Breast epithelium (tissue), 4 donors: ENCODE measurements at regions of chr6 and their contacts with region 1.

Region 1: GRCh38 chr6:16799279-16800193 is 38.3 kb upstream of the ATXN1 start:
- DNase-seq: no peak
- H3K4me3 ChIP-seq: no peak overlapping the region
- H3K27ac ChIP-seq: no peak overlapping the region
- H3K4me1 ChIP-seq: no peaks in the 10 kb centered on the region
- H3K27me3 ChIP-seq: no peaks in the 10 kb centered on the region
- CTCF ChIP-seq: no peak
- POLR2A ChIP-seq: no peak

Region 2: DNA sequence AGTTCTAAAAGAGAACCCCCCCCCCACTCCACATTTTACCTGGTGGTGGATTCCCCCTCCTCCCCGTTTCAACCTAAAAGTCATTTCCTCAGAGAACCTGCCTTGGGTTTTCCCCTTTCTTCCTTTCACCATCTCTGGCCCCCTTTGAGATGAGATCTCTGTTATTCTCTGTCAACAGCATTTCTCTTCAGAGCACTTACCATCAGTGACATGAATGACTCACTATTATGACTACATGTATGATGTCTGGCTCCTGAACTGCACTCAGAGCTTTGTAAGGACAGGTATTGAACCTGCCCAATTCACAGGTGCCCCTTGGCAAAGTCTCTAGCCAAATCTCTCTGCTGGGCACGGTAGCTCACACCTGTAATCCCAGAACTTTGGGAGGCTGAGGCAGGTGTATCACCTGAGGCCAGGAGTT is 1615.1 kb before region 1 on chr6:
- intact Hi-C with region 1: loop called (anchors 10 kb)
- DNase-seq: no peak
- H3K4me3 ChIP-seq: no peak overlapping the region
- H3K27ac ChIP-seq: no peak overlapping the region
- H3K4me1 ChIP-seq: no peaks in the 10 kb centered on the region
- H3K27me3 ChIP-seq: no peaks in the 10 kb centered on the region
- CTCF ChIP-seq: no peak
- POLR2A ChIP-seq: no peak

Region 3: DNA sequence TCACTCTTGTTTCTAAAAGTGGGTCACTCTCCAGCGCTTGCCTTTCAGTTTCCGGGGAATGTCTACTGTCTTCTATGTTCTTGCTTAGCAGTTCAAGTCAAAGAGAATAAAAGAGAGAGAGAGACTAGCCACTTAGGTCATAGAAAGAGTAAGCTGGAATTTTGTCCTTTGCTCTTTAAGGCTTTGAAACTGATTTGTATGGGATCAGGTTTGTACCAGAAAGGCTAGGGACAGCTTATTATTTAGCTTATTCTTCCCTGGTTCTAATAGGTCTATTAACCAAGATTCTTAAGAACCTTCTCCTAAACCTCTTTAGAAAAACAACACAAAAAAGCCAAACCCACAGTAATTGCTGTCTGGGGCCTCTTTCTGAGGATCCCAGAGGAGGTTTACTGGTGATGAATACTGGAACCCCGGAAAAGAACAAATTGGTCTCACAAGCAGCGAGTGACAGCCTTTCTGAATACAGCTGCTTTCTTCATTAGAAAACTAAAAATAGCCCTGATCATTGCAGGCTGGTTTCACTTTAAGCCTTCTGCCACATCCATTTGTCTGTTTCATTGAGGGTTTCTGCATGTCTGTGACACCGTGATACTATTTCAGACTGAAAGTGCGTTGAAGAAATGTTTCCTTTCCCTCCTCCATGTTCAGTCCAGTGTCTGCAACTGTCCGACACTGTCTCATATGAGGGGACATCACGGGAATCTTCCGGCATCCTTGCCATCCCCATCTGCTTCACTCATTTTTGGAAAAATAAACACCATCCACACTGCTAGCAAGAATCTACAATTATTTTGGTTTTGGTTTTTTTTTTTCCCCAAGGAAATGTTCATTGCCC is 36.8 kb after region 1 on chr6:
- intact Hi-C with region 1: no loop called
- DNase-seq: no peak
- H3K4me3 ChIP-seq: peak overlapping the region; percentile 10 to 54 (median 14)
- H3K27ac ChIP-seq: peak overlapping the region in 1 of 2 donors; percentile 52
- H3K4me1 ChIP-seq: no peaks in the 10 kb centered on the region
- H3K27me3 ChIP-seq: no peaks in the 10 kb centered on the region
- CTCF ChIP-seq: no peak
- POLR2A ChIP-seq: no peak

Region 4: GRCh38 chr6:16964553-16965501 is 165.3 kb after region 1 on chr6:
- intact Hi-C with region 1: no loop called
- DNase-seq: peak; percentile 61 to 80
- H3K4me3 ChIP-seq: peak overlapping the region in 1 of 3 donors; percentile 40
- H3K27ac ChIP-seq: no peak overlapping the region
- H3K4me1 ChIP-seq: peaks cover 0 to 3% of the 10 kb centered on the region in 2 donors
- H3K27me3 ChIP-seq: no peaks in the 10 kb centered on the region
- CTCF ChIP-seq: peak; percentile 42 to 90 (median 82)
- POLR2A ChIP-seq: no peak